Adrenal gland (tissue), 19 donors: ENCODE measurements at regions of chr4 and their contacts with region 1.

Region 1: GRCh38 chr4:94127707-94128328 is 79.8 kb upstream of the SMARCAD1 start:
- DNase-seq: no peak
- H3K4me3 ChIP-seq: no peak overlapping the region
- H3K27ac ChIP-seq: no peak overlapping the region
- H3K4me1 ChIP-seq: no peaks in the 10 kb centered on the region
- H3K27me3 ChIP-seq: no peaks in the 10 kb centered on the region
- CTCF ChIP-seq: peak; percentile 36 to 61 (median 46)
- POLR2A ChIP-seq: no peak

Region 2: GRCh38 chr4:93791570-93792195 is 336.1 kb before region 1 on chr4:
- intact Hi-C with region 1: loop called (anchors 5 to 10 kb)
- DNase-seq: peak; percentile 40 to 76 (median 56)
- H3K4me3 ChIP-seq: no peak overlapping the region
- H3K27ac ChIP-seq: no peak overlapping the region
- H3K4me1 ChIP-seq: no peaks in the 10 kb centered on the region
- H3K27me3 ChIP-seq: no peaks in the 10 kb centered on the region
- CTCF ChIP-seq: peak; percentile 56 to 87 (median 75)
- POLR2A ChIP-seq: no peak

Region 3: GRCh38 chr4:94084155-94084554 is 43.7 kb before region 1 on chr4:
- intact Hi-C with region 1: no loop called
- DNase-seq: no peak
- H3K4me3 ChIP-seq: no peak overlapping the region
- H3K27ac ChIP-seq: no peak overlapping the region
- H3K4me1 ChIP-seq: no peaks in the 10 kb centered on the region
- H3K27me3 ChIP-seq: no peaks in the 10 kb centered on the region
- CTCF ChIP-seq: no peak
- POLR2A ChIP-seq: no peak